ENCODE measurements at regions of chr9 and their contacts with region 1.

Region 1: DNA sequence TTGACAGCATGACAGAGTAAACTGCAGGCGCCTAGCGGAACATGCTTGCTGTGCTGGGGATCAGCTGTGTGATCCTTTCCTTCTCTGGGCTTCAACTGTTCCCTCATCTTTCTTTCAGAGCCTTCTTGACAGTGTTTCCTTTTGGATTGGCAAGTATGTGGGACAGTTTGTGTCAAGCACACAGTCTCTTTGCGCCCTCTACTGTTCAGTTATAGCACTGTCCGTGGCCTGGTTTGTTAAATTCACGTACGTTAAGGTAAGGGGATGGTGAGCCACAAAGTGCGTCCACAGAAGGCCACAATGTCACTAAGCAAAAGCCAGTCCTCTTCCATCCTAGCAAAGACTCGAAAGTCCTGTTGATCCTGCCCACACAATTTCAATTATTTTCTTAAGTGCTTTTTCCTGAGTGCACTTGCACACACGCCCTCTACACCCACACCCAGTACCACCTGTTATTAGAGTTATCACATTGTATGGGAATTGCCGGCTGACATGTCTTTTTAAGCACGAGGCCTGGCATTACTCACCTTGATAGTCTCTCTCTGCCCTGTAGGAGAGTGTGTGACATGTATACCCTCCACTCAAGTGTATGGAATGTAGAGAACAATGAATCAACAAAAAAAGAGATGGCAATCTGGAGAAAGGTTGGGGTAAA is 22.5 kb upstream of the PTPN3 start:
- DNase-seq: peak in 2 of 3 donors; percentile 36 to 73
- ATAC-seq: peak; percentile 84 to 88
- H3K4me3 ChIP-seq: no peak overlapping the region
- H3K27ac ChIP-seq: no peak overlapping the region
- H3K4me1 ChIP-seq: no peaks in the 10 kb centered on the region
- H3K27me3 ChIP-seq: no peaks in the 10 kb centered on the region

Region 2: DNA sequence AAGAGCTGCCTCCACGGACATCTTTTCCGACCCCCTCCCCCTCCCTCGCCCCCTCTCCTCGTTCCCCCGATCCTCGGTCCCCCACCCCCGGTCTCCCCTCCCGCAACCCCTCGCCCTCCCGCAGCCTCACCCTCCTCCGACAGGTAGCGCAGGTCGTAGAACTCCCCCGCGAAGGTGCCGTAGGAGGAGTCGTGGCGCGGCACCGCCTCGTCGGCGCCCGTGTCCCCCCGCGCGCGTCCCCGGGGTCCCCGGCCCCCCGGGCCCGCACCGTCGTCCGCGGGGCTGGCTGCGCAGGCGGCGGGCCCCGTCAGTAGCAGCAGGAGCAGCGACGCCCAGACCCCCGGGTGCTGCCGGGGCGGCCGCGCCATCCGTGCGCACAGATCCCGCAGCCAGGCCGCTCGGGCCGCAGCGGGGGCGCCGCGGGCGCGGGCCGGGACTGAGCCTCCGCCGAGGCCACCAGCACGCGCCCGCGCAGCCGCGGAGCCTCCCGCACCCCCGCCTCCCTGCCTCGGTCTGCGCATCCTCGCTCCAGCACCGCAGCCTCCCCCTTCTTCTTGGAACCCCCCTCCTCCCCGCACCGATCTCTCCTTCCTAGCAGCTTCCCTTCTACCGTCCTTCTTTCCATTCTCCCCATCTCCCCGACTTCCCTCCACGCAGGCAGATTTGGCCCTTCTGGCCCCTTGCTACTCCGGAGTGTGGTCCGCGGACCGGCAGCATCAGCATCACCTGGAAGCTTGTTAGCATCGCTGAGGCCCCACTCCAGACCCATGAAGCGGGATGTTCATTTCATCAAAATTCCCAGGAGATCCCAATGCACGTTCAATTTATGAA is 353.6 kb before region 1 on chr9 and contains the start of gene FRRS1L:
- intact Hi-C with region 1: no loop called
- DNase-seq: no peak
- ATAC-seq: peak; percentile 40 to 63
- H3K4me3 ChIP-seq: peak within 1 kb of the TSS; percentile 64
- H3K27ac ChIP-seq: no peak within 1 kb of the TSS
- H3K4me1 ChIP-seq: no peaks in the 10 kb centered on the region
- H3K27me3 ChIP-seq: no peaks in the 10 kb centered on the region
- total RNA-seq, gene FRRS1L: 3.9 to 5.9 (median 4.4) TPM

Region 3: GRCh38 chr9:109440797-109441287 is 79.8 kb before region 1 on chr9:
- intact Hi-C with region 1: loop called in 3 of 4 experiments (anchors 5 kb)
- DNase-seq: peak in 1 of 3 donors; percentile 24
- ATAC-seq: peak; percentile 79 to 80
- H3K4me3 ChIP-seq: no peak overlapping the region
- H3K27ac ChIP-seq: no peak overlapping the region
- H3K4me1 ChIP-seq: peaks cover 3% of the 10 kb centered on the region
- H3K27me3 ChIP-seq: no peaks in the 10 kb centered on the region

Region 4: DNA sequence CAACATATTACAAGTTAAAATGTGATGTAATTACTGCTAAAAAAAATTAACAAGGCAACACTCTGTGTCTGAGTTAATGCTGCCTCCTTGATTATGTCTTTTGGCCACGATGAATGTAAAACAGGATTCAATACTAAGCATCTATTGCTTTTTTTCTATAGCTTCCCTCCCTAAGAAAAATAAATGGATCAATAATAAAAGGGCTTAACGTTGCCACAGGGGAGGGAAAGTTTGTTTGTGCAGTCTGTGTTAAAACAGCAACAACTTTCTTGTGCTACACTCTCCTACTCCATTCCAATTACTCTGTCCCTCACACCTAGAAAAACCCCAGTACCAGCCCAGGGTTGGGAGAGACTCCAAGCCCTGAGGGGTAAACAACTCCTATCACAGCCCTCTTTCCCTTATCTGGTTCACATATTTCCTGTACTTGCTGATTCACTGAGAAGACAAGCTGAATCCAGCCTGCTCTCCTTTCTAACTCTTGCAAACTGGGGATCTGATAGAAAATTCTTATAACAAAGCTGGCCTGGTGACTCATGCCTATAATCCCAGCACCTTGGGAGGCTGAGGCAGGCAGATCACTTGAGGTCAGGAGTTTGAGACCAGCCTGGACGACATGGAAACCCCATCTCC is 67.3 kb before region 1 on chr9:
- intact Hi-C with region 1: loop called in 1 of 4 experiments (anchors 10 kb)
- DNase-seq: no peak
- ATAC-seq: peak in 1 of 2 donors; percentile 55
- H3K4me3 ChIP-seq: no peak overlapping the region
- H3K27ac ChIP-seq: no peak overlapping the region
- H3K4me1 ChIP-seq: no peaks in the 10 kb centered on the region
- H3K27me3 ChIP-seq: no peaks in the 10 kb centered on the region

Region 5: GRCh38 chr9:109590945-109591344 is 70.3 kb after region 1 on chr9:
- intact Hi-C with region 1: no loop called
- DNase-seq: peak in 2 of 3 donors; percentile 20 to 57
- ATAC-seq: peak; percentile 42 to 61
- H3K4me3 ChIP-seq: no peak overlapping the region
- H3K27ac ChIP-seq: peak overlapping the region; percentile 41
- H3K4me1 ChIP-seq: peaks cover under 1% of the 10 kb centered on the region
- H3K27me3 ChIP-seq: no peaks in the 10 kb centered on the region

Region 6: GRCh38 chr9:109880277-109881169 is 359.9 kb after region 1 on chr9:
- intact Hi-C with region 1: no loop called
- DNase-seq: no peak
- ATAC-seq: peak; percentile 13 to 38
- H3K4me3 ChIP-seq: no peak overlapping the region
- H3K27ac ChIP-seq: no peak overlapping the region
- H3K4me1 ChIP-seq: peaks cover 7% of the 10 kb centered on the region
- H3K27me3 ChIP-seq: no peaks in the 10 kb centered on the region

Measured in right cardiac atrium (tissue), 5 donors.